ENCODE measurements at regions of chr12 and their contacts with region 1.

Region 1: GRCh38 chr12:32755654-32756475 is at the start of gene YARS2:
- DNase-seq: peak; percentile 93
- H3K27ac ChIP-seq: peak within 1 kb of the TSS; percentile 95
- CTCF ChIP-seq: peak; percentile 75

Region 2: DNA sequence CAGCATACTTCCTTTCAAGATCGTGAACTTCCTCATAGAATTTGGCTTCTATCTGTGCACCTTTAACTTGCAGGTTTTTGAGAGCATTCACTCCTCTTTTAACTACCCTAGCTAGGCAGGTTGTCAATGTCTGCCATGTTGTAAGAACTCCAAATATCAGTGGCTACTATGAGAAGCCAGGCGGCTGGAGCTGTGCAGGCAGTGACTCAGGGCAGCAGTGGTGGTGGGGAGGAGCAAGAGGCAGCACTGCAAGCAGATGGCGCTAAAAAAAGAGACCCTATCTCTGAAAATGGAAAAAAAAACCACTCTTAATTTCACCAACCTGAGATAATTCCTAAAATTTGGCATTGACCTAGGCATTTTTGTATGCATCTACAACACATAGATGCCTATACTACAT is 28.6 kb before region 1 on chr12:
- CTCF ChIA-PET with region 1: no interaction called
- POLR2A ChIA-PET with region 1: no interaction called
- DNase-seq: no peak
- H3K27ac ChIP-seq: no peak overlapping the region
- CTCF ChIP-seq: no peak

Region 3: DNA sequence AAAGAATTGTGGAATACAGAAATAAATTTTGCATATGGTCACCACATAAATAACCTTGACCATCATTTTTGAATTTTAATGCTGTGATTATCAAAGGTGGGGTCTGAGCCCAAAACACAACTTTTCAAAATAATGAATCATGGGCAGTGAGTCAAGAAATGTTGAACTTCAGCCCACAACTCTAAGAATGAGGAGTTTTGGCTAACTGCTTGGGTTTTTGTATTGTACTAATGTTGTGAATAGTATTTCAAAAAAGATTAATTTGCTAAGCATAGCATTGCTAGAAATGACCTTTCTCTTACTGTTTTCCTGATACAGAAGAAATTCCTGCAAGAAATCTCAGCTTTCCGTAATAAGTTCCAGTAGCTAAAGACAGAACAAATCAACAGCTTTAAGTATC is 24.2 kb after region 1 on chr12:
- CTCF ChIA-PET with region 1: no interaction called
- POLR2A ChIA-PET with region 1: no interaction called
- DNase-seq: no peak
- H3K27ac ChIP-seq: no peak overlapping the region
- CTCF ChIP-seq: no peak

Region 4: GRCh38 chr12:34022079-34022830 is 1266.4 kb after region 1 on chr12 and contains the start of gene ALG10:
- CTCF ChIA-PET with region 1: interaction called, 17 read pairs
- POLR2A ChIA-PET with region 1: interaction called, 17 read pairs
- DNase-seq: peak; percentile 84
- H3K27ac ChIP-seq: peak within 1 kb of the TSS; percentile 81
- CTCF ChIP-seq: peak; percentile 52